ENCODE measurements at regions of chr20 and their contacts with region 1.

Region 1: DNA sequence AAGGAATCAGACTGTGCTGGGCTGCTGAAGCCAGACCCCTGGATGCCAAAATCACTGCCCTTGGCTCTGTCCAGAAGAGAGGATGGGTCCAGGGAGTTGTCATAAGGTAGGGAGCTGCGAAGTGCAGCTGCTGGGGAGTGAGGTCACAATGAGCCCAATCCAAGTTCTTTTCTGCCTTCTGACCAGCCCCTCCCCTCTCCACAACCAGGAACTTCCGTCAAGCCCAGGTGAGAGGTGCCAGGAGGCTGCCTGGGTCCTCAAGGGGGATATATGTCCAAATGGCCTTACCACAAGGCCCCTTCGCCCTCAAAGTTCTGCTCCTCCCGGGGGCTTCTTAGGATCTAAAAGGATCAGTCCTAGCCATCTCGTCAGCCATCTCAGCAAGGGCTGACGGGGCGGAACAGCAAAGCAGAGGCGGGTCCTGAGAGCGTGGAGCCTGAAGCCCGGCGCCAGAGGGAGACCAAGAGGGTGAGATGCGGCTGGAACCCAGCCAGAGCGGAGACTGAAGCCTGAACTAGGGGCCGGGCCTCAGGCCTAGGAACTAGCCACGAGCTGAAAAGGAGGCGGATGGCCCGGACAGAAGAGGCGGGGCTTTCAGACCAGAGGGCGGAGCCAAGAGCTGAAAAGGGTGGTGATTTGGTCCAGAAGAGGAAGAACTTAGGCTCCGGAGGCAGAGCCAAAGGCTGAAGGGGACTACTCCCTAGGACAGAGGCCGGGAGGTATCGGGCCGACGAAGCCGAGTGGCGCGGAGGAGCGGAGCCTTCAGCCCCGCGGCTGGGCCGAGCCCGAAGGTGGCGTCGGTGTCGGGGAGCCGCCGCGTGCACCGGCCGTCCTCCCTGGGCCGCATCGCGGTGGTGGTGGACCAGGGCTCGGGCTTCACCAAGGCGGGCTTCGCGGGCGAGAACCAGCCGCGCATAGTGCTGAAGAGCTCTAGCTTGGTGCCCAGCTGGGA is at the start of gene ACTL10:
- DNase-seq: peak; percentile 100
- H3K4me3 ChIP-seq: peak within 1 kb of the TSS; percentile 47 to 66 (median 52)
- H3K27ac ChIP-seq: peak within 1 kb of the TSS; percentile 86 to 98 (median 92)
- H3K4me1 ChIP-seq: peaks cover 0 to 50% (median 40%) of the 10 kb centered on the region in 4 donors
- H3K27me3 ChIP-seq: no peaks in the 10 kb centered on the region
- CTCF ChIP-seq: peak in 3 of 4 experiments; percentile 26 to 30 (median 28)
- EP300 ChIP-seq: peak in 1 of 4 donors; percentile 14
- POLR2A ChIP-seq: peak; percentile 64 to 76
- total RNA-seq, gene ACTL10: 0.54 to 1.1 (median 0.61) TPM

Region 2: DNA sequence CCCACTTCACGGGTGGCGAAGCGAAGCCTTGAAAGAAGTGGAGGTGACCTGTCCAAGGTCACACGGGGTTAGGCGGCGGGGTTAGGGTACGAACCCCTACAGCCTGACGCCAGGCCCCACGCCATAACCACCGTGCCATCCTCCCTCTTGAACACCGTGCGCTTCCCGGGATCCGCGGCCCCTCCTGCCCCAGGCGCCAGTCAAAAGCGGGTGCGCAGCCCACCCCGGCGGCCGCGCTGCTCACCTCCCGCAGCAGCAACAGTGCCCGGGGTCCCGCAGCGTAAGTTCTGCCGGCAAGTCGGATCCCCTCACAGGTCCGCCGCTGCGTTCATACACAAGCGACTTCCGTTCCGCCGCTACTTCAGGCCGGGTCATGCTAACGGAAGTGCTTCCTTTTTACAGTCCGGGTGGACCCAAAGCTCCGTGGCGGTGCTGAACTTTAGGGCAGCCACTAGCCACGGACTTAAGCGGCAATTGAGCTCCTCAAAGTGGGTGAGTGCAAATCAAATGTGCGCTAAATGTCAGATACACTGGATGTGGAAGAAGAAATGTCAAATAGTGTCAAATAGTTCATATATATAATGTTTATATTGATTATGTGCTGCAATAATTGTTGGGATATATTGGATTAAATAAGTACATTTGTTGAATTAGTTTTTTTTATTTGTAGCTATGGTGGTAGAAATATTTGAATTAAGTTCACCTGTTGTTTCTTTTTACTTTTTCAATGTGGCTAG is 265.2 kb before region 1 on chr20 and contains the start of gene CDK5RAP1:
- intact Hi-C with region 1: loop called (anchors 5 kb)
- DNase-seq: peak; percentile 92
- H3K4me3 ChIP-seq: peak within 1 kb of the TSS; percentile 80 to 99 (median 95)
- H3K27ac ChIP-seq: peak within 1 kb of the TSS; percentile 73 to 78 (median 76)
- H3K4me1 ChIP-seq: peaks cover 0 to 37% (median 26%) of the 10 kb centered on the region in 4 donors
- H3K27me3 ChIP-seq: no peaks in the 10 kb centered on the region
- CTCF ChIP-seq: no peak
- EP300 ChIP-seq: no peak
- POLR2A ChIP-seq: peak in 1 of 2 donors; percentile 12
- total RNA-seq, gene CDK5RAP1: 18.4 to 21.3 (median 20.1) TPM

Region 3: GRCh38 chr20:33443512-33444239 is 222.9 kb before region 1 on chr20 and contains the start of gene SNTA1:
- intact Hi-C with region 1: loop called (anchors 5 kb)
- DNase-seq: peak; percentile 96
- H3K4me3 ChIP-seq: peak within 1 kb of the TSS; percentile 53 to 86 (median 84)
- H3K27ac ChIP-seq: peak within 1 kb of the TSS; percentile 83 to 91 (median 86)
- H3K4me1 ChIP-seq: peaks cover 0 to 25% (median 14%) of the 10 kb centered on the region in 4 donors
- H3K27me3 ChIP-seq: no peaks in the 10 kb centered on the region
- CTCF ChIP-seq: no peak
- EP300 ChIP-seq: no peak
- POLR2A ChIP-seq: no peak
- total RNA-seq, gene SNTA1: 29.3 to 42.7 (median 33.4) TPM

Region 4: DNA sequence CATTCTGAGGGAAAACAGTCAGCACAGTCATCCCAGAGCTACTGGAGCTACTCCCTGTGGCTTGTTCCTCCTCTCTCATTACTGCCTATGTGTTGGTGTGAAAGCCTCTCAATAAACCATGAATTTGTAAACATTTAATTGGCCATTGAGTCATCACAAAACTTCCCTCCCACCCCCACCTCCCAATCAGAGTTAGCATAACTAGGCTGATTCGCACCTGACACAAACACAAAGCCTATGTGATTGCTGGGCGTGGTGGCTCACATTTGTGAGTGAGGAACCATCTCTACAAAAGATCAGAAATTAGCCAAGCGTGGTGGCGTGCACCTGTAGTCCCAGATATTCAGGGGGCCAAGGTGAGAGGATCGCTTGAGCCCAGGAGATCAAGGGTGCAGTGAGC is 205.9 kb before region 1 on chr20:
- intact Hi-C with region 1: loop called (anchors 1 kb)
- DNase-seq: no peak
- H3K4me3 ChIP-seq: no peak overlapping the region
- H3K27ac ChIP-seq: no peak overlapping the region
- H3K4me1 ChIP-seq: peaks cover 0 to 2% (median 0%) of the 10 kb centered on the region in 4 donors
- H3K27me3 ChIP-seq: no peaks in the 10 kb centered on the region
- CTCF ChIP-seq: no peak
- EP300 ChIP-seq: no peak
- POLR2A ChIP-seq: no peak

Region 5: GRCh38 chr20:33561692-33562601 is 104.6 kb before region 1 on chr20:
- intact Hi-C with region 1: loop called (anchors 5 kb)
- DNase-seq: peak; percentile 96
- H3K4me3 ChIP-seq: peak overlapping the region in 3 of 4 donors; percentile 25 to 35 (median 25)
- H3K27ac ChIP-seq: peak overlapping the region; percentile 57 to 79 (median 74)
- H3K4me1 ChIP-seq: peaks cover 0 to 54% (median 45%) of the 10 kb centered on the region in 4 donors
- H3K27me3 ChIP-seq: no peaks in the 10 kb centered on the region
- CTCF ChIP-seq: no peak
- EP300 ChIP-seq: peak in 3 of 4 donors; percentile 51 to 81 (median 57)
- POLR2A ChIP-seq: no peak

Region 6: DNA sequence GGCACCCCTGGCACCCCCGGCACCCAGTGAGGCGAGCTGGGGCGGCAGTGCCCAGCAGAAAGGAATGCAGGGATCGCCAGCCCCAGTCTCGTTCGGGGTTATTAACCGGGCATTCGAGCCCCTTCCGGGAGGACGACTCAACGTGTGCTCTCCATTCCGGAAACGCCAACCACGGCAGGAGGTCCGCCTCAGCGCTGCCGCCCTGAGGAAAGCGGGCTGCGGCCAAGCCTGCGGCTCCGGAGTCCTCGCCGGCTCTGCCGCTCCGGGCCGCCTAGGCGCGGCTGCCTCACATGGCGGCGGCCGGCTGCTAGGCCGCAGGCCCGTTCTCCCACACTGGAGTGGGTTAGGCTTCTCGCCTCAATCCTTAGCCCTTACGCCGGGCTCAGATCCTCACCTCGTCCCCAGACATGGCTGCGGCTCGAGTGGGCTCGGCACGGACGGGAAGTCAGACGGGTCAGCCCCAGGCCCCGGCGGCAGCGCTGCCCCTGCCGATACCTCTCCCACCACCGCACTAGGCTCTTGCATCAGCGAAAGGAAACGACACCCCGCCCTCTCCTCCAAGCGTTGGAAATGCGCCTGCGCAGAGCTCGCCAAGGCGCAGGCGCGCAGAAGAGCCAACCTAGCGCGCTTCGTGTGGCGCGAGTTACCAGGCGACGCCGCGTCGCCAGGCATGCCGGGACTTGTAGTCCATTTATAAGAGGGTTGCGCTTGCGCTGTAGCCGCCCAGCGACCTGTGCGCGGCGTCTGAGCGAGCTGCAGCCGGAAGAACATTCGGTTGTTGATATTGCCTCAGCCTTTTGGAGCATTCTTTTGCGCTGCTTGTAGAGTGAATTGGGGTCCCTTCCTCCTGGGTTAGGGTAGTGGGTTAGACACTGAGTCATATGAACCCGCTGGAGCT is 445.4 kb after region 1 on chr20 and contains the start of gene EIF2S2:
- intact Hi-C with region 1: loop called (anchors 5 kb)
- DNase-seq: peak; percentile 98
- H3K4me3 ChIP-seq: peak within 1 kb of the TSS; percentile 88 to 93 (median 90)
- H3K27ac ChIP-seq: peak within 1 kb of the TSS; percentile 97 to 99 (median 98)
- H3K4me1 ChIP-seq: peaks cover 0 to 47% (median 42%) of the 10 kb centered on the region in 4 donors
- H3K27me3 ChIP-seq: no peaks in the 10 kb centered on the region
- CTCF ChIP-seq: no peak
- EP300 ChIP-seq: peak in 1 of 4 donors; percentile 56
- POLR2A ChIP-seq: peak; percentile 95 to 96
- total RNA-seq, gene EIF2S2: 44.6 to 52.8 (median 47.4) TPM

Measured in sigmoid colon (tissue), 7 donors.